Activated B cell treated with CpG ODN at 0.5 μM for 24 hours (primary cell): ENCODE measurements at regions of chr21 and their contacts with region 1.

Region 1: GRCh38 chr21:33562389-33562788 is 19.6 kb downstream of the SON start:
- DNase-seq: no peak
- ATAC-seq: no peak
- H3K4me3 Mint-ChIP-seq: no peak overlapping the region
- H3K27ac Mint-ChIP-seq: no peak overlapping the region
- H3K4me1 Mint-ChIP-seq: peaks cover 5% of the 10 kb centered on the region
- H3K27me3 Mint-ChIP-seq: no peaks in the 10 kb centered on the region
- CTCF ChIP-seq: no peak

Region 2: GRCh38 chr21:33549848-33550771 is 12.3 kb before region 1 on chr21:
- CTCF ChIA-PET with region 1: no interaction called
- POLR2A ChIA-PET with region 1: no interaction called
- intact Hi-C with region 1: loop called (anchors 2 kb)
- DNase-seq: no peak
- ATAC-seq: no peak
- H3K4me3 Mint-ChIP-seq: no peak overlapping the region
- H3K27ac Mint-ChIP-seq: no peak overlapping the region
- H3K4me1 Mint-ChIP-seq: peaks cover 25% of the 10 kb centered on the region
- H3K27me3 Mint-ChIP-seq: no peaks in the 10 kb centered on the region
- CTCF ChIP-seq: no peak